ENCODE measurements at regions of chr7 and their contacts with region 1.

Region 1: GRCh38 chr7:16708980-16709379 is 44.6 kb upstream of the TSPAN13 start:
- DNase-seq: peak in 1 of 3 donors; percentile 42
- H3K4me3 ChIP-seq: no peak overlapping the region
- H3K27ac ChIP-seq: no peak overlapping the region
- H3K4me1 ChIP-seq: no peaks in the 10 kb centered on the region
- H3K27me3 ChIP-seq: no peaks in the 10 kb centered on the region

Region 2: DNA sequence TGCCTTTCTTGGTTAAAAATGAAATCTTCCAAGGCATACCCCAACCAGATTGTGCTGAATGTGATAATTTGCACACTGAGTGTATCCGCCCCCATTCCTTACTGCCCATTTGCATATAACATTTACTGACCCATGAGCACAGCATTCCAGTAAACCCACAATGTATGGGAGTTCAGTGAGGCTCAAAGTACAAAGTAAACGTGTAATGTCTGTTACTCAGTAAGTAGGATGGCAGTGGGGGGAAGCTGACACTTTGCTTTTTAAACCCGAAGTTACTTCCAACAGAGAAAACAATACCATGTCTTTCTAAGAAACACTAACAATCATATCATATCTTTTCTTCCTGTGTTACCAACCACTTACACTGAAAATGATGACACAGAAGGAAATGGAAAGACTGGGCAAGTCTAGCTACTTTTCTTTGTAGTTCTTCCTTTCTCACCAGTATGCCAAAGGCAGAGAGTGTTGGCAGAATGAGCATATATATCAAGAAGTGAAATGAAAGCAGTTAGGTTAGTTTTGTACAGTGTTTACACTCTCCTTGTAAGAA is 216.4 kb before region 1 on chr7:
- CTCF ChIA-PET with region 1: no interaction called
- POLR2A ChIA-PET with region 1: no interaction called
- DNase-seq: no peak
- H3K4me3 ChIP-seq: no peak overlapping the region
- H3K27ac ChIP-seq: no peak overlapping the region
- H3K4me1 ChIP-seq: no peaks in the 10 kb centered on the region
- H3K27me3 ChIP-seq: no peaks in the 10 kb centered on the region

Region 3: GRCh38 chr7:16695621-16696237 is 13.3 kb before region 1 on chr7:
- CTCF ChIA-PET with region 1: interaction called, 11 read pairs
- POLR2A ChIA-PET with region 1: interaction called, 6 read pairs
- DNase-seq: peak; percentile 55 to 76 (median 71)
- H3K4me3 ChIP-seq: no peak overlapping the region
- H3K27ac ChIP-seq: no peak overlapping the region
- H3K4me1 ChIP-seq: no peaks in the 10 kb centered on the region
- H3K27me3 ChIP-seq: no peaks in the 10 kb centered on the region

Region 4: GRCh38 chr7:16735020-16735419 is 26.0 kb after region 1 on chr7:
- CTCF ChIA-PET with region 1: no interaction called
- POLR2A ChIA-PET with region 1: no interaction called
- DNase-seq: no peak
- H3K4me3 ChIP-seq: no peak overlapping the region
- H3K27ac ChIP-seq: no peak overlapping the region
- H3K4me1 ChIP-seq: peaks cover 0 to 4% (median 0%) of the 10 kb centered on the region in 4 experiments
- H3K27me3 ChIP-seq: no peaks in the 10 kb centered on the region

Region 5: DNA sequence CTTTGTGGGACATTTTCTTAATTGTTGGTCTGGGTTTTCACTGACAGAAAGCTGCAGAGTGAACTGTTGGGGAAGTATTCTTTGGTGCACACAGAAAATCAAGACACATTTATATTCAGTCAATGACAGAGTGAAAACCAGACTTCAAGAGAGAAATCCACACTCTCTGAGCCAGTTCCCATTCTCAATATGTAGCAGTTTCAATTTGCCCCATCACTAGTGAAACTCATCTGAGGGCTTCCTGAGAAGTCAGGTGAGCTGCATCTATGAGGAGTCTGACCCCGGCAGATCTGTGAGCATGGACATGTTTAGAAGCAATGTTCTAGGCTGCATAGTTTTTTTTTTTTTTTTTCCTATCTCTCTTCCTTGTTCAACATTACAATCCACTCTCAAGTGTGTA is 425.8 kb after region 1 on chr7:
- CTCF ChIA-PET with region 1: no interaction called
- POLR2A ChIA-PET with region 1: no interaction called
- DNase-seq: no peak
- H3K4me3 ChIP-seq: no peak overlapping the region
- H3K27ac ChIP-seq: no peak overlapping the region
- H3K4me1 ChIP-seq: peaks cover 0 to 21% (median 8%) of the 10 kb centered on the region in 4 experiments
- H3K27me3 ChIP-seq: no peaks in the 10 kb centered on the region

Measured in common myeloid progenitor, CD34-positive (primary cell).